IMR-90 (cell line): ENCODE measurements at regions of chr13 and their contacts with region 1.

Region 1: GRCh38 chr13:33542283-33543088 is 256.9 kb upstream of the STARD13 start:
- DNase-seq: peak; percentile 100
- ATAC-seq: peak; percentile 94
- H3K4me3 ChIP-seq: peak overlapping the region; percentile 54
- H3K27ac ChIP-seq: peak overlapping the region; percentile 92
- H3K4me1 ChIP-seq: peaks cover 12% of the 10 kb centered on the region
- H3K27me3 ChIP-seq: no peaks in the 10 kb centered on the region
- CTCF ChIP-seq: peak; percentile 99
- POLR2A ChIP-seq: peak; percentile 89
- RAD21 ChIP-seq: peak; percentile 99

Region 2: GRCh38 chr13:32639502-32640105 is 902.9 kb before region 1 on chr13:
- CTCF ChIA-PET with region 1: no interaction called
- POLR2A ChIA-PET with region 1: no interaction called
- dilution Hi-C with region 1: no loop called
- in situ Hi-C with region 1: no loop called
- intact Hi-C with region 1: loop called (anchors 10 kb)
- DNase-seq: peak; percentile 77
- ATAC-seq: peak; percentile 93
- H3K4me3 ChIP-seq: no peak overlapping the region
- H3K27ac ChIP-seq: no peak overlapping the region
- H3K4me1 ChIP-seq: no peaks in the 10 kb centered on the region
- H3K27me3 ChIP-seq: no peaks in the 10 kb centered on the region
- CTCF ChIP-seq: peak; percentile 77
- POLR2A ChIP-seq: no peak
- RAD21 ChIP-seq: peak; percentile 72

Region 3: GRCh38 chr13:33125821-33126570 is 416.5 kb before region 1 on chr13:
- CTCF ChIA-PET with region 1: no interaction called
- POLR2A ChIA-PET with region 1: no interaction called
- dilution Hi-C with region 1: no loop called
- in situ Hi-C with region 1: no loop called
- intact Hi-C with region 1: loop called (anchors 5 kb)
- DNase-seq: peak; percentile 97
- ATAC-seq: peak; percentile 85
- H3K4me3 ChIP-seq: no peak overlapping the region
- H3K27ac ChIP-seq: peak overlapping the region; percentile 80
- H3K4me1 ChIP-seq: peaks cover 30% of the 10 kb centered on the region
- H3K27me3 ChIP-seq: no peaks in the 10 kb centered on the region
- CTCF ChIP-seq: no peak
- POLR2A ChIP-seq: no peak
- RAD21 ChIP-seq: peak; percentile 9; the same call in 1 of the 2 replicates

Region 4: GRCh38 chr13:33285420-33286124 is 256.9 kb before region 1 on chr13 and contains the start of gene STARD13:
- CTCF ChIA-PET with region 1: interaction called, 3 read pairs
- POLR2A ChIA-PET with region 1: no interaction called
- dilution Hi-C with region 1: no loop called
- in situ Hi-C with region 1: no loop called
- intact Hi-C with region 1: loop called (anchors 1 kb)
- DNase-seq: peak; percentile 98
- ATAC-seq: peak; percentile 84
- H3K4me3 ChIP-seq: peak within 1 kb of the TSS; percentile 68
- H3K27ac ChIP-seq: peak within 1 kb of the TSS; percentile 97
- H3K4me1 ChIP-seq: peaks cover 17% of the 10 kb centered on the region
- H3K27me3 ChIP-seq: no peaks in the 10 kb centered on the region
- CTCF ChIP-seq: peak; percentile 64
- POLR2A ChIP-seq: peak; percentile 99
- RAD21 ChIP-seq: peak; percentile 60
- total RNA-seq, gene STARD13: 46.6 and 46.9 TPM in 2 replicates

Region 5: DNA sequence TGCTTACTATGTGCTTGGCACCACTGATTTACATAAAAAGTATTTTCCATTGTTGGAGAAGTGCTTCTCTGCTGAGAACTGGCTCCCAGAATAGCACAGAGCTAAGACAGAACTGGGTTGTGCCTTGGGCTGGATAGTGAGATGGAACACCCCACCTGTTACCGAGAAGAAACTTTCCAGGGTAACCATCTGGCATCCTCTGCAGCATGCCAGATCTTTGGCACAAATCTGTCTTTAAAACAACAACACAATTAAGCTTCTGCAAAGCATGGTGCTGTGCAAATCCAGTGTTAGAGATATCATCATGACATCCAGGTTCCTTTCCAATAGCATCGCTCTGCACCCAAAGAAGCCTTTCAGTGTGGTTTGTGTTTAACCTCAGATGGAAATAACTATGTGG is 73.0 kb after region 1 on chr13:
- CTCF ChIA-PET with region 1: no interaction called
- POLR2A ChIA-PET with region 1: no interaction called
- dilution Hi-C with region 1: no loop called
- in situ Hi-C with region 1: no loop called
- intact Hi-C with region 1: no loop called
- DNase-seq: no peak
- ATAC-seq: no peak
- H3K4me3 ChIP-seq: no peak overlapping the region
- H3K27ac ChIP-seq: no peak overlapping the region
- H3K4me1 ChIP-seq: peaks cover 3% of the 10 kb centered on the region
- H3K27me3 ChIP-seq: no peaks in the 10 kb centered on the region
- CTCF ChIP-seq: no peak
- POLR2A ChIP-seq: no peak
- RAD21 ChIP-seq: no peak

Region 6: GRCh38 chr13:33723772-33724435 is 181.4 kb after region 1 on chr13:
- CTCF ChIA-PET with region 1: interaction called, 7 read pairs
- POLR2A ChIA-PET with region 1: interaction called, 5 read pairs
- dilution Hi-C with region 1: no loop called
- in situ Hi-C with region 1: loop called (anchors 5 kb)
- intact Hi-C with region 1: loop called (anchors 1 kb)
- DNase-seq: peak; percentile 85
- ATAC-seq: peak; percentile 94
- H3K4me3 ChIP-seq: no peak overlapping the region
- H3K27ac ChIP-seq: no peak overlapping the region
- H3K4me1 ChIP-seq: peaks cover 6% of the 10 kb centered on the region; the same call in 1 of the 2 replicates
- H3K27me3 ChIP-seq: no peaks in the 10 kb centered on the region
- CTCF ChIP-seq: peak; percentile 84
- POLR2A ChIP-seq: no peak
- RAD21 ChIP-seq: peak; percentile 88

Region 7: DNA sequence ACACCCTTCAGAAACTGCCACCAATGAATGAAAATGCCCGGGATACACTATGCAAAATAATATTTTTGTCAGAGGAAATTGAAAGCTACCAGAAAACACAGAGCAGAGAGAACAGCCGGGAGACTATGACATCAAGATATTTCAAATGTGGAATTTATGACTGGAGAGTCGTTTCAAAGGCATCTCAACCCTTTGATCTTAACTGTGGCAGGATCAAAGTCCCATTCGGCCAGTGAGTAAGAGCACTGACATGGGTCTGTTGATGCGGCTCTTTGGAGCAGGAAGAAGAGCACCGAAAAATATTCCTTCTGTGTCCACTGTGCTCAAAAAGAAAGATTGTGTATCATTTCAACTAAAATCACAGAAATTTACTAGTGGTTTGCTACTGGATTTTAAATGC is 477.4 kb after region 1 on chr13:
- CTCF ChIA-PET with region 1: no interaction called
- POLR2A ChIA-PET with region 1: no interaction called
- dilution Hi-C with region 1: no loop called
- in situ Hi-C with region 1: no loop called
- intact Hi-C with region 1: no loop called
- DNase-seq: no peak
- ATAC-seq: no peak
- H3K4me3 ChIP-seq: no peak overlapping the region
- H3K27ac ChIP-seq: no peak overlapping the region
- H3K4me1 ChIP-seq: no peaks in the 10 kb centered on the region
- H3K27me3 ChIP-seq: no peaks in the 10 kb centered on the region
- CTCF ChIP-seq: no peak
- POLR2A ChIP-seq: no peak
- RAD21 ChIP-seq: no peak